Tibial artery (tissue), 4 donors: ENCODE measurements at regions of chr1 and their contacts with region 1.

Region 1: GRCh38 chr1:226121587-226122400 is 59.3 kb downstream of the H3-3A start:
- DNase-seq: peak; percentile 37 to 72
- H3K4me3 ChIP-seq: peak overlapping the region; percentile 59 to 62
- H3K27ac ChIP-seq: peak overlapping the region; percentile 44 to 52
- H3K4me1 ChIP-seq: peaks cover 0 to 25% (median 10%) of the 10 kb centered on the region in 4 donors
- H3K27me3 ChIP-seq: peaks cover 0 to 2% of the 10 kb centered on the region in 2 donors
- CTCF ChIP-seq: peak; percentile 70 to 93

Region 2: DNA sequence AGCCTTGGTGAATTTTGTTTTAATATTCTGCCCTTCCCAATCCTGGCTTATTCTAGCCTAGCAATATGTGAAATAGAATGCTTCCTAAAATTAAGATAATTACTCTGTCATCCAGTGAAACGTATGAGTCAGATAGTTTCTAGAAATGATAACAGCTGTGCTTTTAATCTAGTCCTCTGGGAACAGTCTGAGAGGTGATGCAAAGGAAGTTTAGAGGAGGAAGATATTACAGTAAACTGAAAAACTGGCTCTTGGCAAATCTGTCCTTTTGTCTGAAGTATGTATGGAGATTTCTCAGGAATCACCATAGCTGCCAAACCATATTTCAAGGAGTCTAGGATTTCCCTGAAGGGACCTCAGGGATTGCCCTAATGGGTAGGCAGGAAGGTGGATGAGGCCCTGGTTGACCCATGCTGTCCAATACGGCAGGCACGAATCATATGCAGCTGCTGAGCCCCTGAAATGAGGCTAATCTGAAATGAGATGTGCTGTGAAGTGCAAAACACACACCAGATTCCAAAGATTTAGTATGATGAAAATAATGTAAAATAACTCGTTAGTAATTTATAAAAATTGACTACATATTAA is 623.2 kb before region 1 on chr1:
- intact Hi-C with region 1: no loop called
- DNase-seq: no peak
- H3K4me3 ChIP-seq: no peak overlapping the region
- H3K27ac ChIP-seq: no peak overlapping the region
- H3K4me1 ChIP-seq: no peaks in the 10 kb centered on the region
- H3K27me3 ChIP-seq: no peaks in the 10 kb centered on the region
- CTCF ChIP-seq: no peak

Region 3: DNA sequence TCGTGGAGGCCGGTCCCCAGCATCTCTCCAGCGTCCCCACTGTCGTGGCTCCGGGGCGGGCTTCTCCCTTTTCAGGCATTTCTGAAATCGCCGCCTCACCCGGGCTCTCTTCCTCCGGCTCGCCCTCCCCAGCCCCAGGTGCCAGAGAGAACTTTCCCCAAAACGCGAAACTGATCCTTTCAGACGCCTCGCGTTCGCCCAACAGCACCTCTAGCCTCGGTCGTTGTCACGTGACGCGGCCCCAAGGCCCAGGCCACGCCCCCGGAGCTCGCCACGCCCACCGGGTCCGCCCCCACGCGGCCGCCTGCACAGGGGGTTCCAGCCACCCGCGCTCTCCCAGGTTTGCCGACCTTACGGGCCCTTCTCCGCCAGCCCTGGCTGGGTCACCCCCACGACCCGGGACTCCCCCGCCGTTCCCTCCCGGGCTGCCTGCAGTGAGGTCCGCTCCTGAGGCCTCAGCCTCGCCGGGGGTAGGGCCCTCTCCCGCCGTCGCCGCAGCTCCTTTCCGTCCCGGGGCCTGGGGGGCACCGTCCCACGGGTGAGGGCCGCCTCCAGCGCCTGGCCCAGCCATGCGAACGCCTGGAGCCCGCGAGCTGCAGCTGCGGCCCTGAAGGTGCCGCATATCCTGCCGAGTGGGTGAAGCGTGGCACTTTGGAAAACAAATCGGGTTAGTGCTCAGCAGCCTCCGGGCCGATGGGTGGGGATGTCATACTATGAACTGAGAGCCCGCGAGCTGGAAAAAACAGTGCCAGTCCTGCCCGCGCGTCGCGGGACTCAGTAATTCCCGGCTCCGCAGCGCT is 38.3 kb before region 1 on chr1:
- intact Hi-C with region 1: loop called (anchors 5 kb)
- DNase-seq: peak; percentile 92 to 94
- H3K4me3 ChIP-seq: peak overlapping the region; percentile 70 to 95
- H3K27ac ChIP-seq: peak overlapping the region; percentile 83 to 85
- H3K4me1 ChIP-seq: peaks cover 0 to 11% (median 7%) of the 10 kb centered on the region in 4 donors
- H3K27me3 ChIP-seq: no peaks in the 10 kb centered on the region
- CTCF ChIP-seq: peak in 1 of 2 experiments; percentile 3

Region 4: GRCh38 chr1:226201029-226201593 is 79.3 kb after region 1 on chr1:
- intact Hi-C with region 1: loop called (anchors 2 kb)
- DNase-seq: no peak
- H3K4me3 ChIP-seq: no peak overlapping the region
- H3K27ac ChIP-seq: no peak overlapping the region
- H3K4me1 ChIP-seq: no peaks in the 10 kb centered on the region
- H3K27me3 ChIP-seq: peaks cover 0 to 13% of the 10 kb centered on the region in 2 donors
- CTCF ChIP-seq: no peak

Region 5: DNA sequence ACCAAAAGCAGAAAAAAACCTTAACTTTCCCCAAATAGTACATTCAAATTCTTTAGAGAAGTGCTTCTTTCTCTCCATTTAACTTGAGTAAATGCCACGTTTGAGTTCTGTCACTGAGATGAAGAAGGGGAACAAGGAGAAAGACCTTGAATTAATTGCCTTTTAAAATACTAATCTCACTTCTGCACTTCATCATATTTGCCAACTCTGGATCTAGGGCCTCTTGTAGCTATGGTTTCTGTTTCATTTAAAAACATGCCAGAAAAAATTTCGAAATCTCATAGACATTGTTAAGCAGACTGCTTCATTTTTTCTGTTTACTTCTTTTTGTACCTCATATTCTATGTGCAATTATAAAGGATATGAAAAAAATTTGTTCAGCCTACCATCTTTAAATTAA is 126.3 kb after region 1 on chr1:
- intact Hi-C with region 1: no loop called
- DNase-seq: no peak
- H3K4me3 ChIP-seq: no peak overlapping the region
- H3K27ac ChIP-seq: no peak overlapping the region
- H3K4me1 ChIP-seq: no peaks in the 10 kb centered on the region
- H3K27me3 ChIP-seq: no peaks in the 10 kb centered on the region
- CTCF ChIP-seq: no peak

Region 6: GRCh38 chr1:226279498-226279897 is 157.7 kb after region 1 on chr1:
- intact Hi-C with region 1: no loop called
- DNase-seq: no peak
- H3K4me3 ChIP-seq: no peak overlapping the region
- H3K27ac ChIP-seq: no peak overlapping the region
- H3K4me1 ChIP-seq: no peaks in the 10 kb centered on the region
- H3K27me3 ChIP-seq: no peaks in the 10 kb centered on the region
- CTCF ChIP-seq: no peak